Activated B cell treated with CpG ODN at 0.5 μM for 24 hours (primary cell): ENCODE measurements at regions of chr19 and their contacts with region 1.

Region 1: GRCh38 chr19:36418287-36419001 is at the start of gene ZFP82:
- DNase-seq: peak; percentile 87
- ATAC-seq: peak; percentile 95
- H3K4me3 Mint-ChIP-seq: peak within 1 kb of the TSS; percentile 97
- H3K27ac Mint-ChIP-seq: peak within 1 kb of the TSS; percentile 97
- H3K4me1 Mint-ChIP-seq: peaks cover 30% of the 10 kb centered on the region
- H3K27me3 Mint-ChIP-seq: peaks cover 15% of the 10 kb centered on the region
- CTCF ChIP-seq: no peak
- total RNA-seq, gene ZFP82: 10.4 and 11.4 TPM in 2 replicates

Region 2: GRCh38 chr19:36331353-36332228 is 86.9 kb before region 1 on chr19:
- CTCF ChIA-PET with region 1: no interaction called
- POLR2A ChIA-PET with region 1: no interaction called
- intact Hi-C with region 1: loop called (anchors 5 kb)
- DNase-seq: peak; percentile 78
- ATAC-seq: peak; percentile 99
- H3K4me3 Mint-ChIP-seq: peak overlapping the region; percentile 86
- H3K27ac Mint-ChIP-seq: peak overlapping the region; percentile 76
- H3K4me1 Mint-ChIP-seq: peaks cover 26% of the 10 kb centered on the region
- H3K27me3 Mint-ChIP-seq: no peaks in the 10 kb centered on the region
- CTCF ChIP-seq: no peak

Region 3: DNA sequence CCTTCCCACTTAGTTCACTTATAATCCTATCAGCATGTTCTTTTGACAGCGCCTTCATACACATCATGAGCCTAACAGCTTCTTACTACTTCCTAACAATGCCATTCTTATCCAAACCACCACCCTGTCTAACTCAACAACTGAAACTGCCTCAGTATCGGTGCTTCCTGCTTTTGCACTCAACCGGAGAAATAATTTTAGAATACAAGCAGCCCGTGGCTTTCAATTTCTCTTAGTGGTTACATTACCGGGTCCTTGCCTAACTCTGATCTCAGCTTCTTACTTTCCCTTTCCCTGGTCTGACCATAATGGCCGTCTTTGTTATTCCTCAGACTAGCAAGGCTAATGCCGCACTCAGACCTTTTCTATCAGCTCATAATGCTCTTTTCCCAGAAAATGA is 17.0 kb before region 1 on chr19:
- CTCF ChIA-PET with region 1: no interaction called
- POLR2A ChIA-PET with region 1: interaction called, 10 read pairs
- intact Hi-C with region 1: no loop called
- DNase-seq: no peak
- ATAC-seq: peak; percentile 95
- H3K4me3 Mint-ChIP-seq: peak overlapping the region; percentile 69
- H3K27ac Mint-ChIP-seq: peak overlapping the region; percentile 85
- H3K4me1 Mint-ChIP-seq: peaks cover 22% of the 10 kb centered on the region
- H3K27me3 Mint-ChIP-seq: no peaks in the 10 kb centered on the region
- CTCF ChIP-seq: no peak

Region 4: DNA sequence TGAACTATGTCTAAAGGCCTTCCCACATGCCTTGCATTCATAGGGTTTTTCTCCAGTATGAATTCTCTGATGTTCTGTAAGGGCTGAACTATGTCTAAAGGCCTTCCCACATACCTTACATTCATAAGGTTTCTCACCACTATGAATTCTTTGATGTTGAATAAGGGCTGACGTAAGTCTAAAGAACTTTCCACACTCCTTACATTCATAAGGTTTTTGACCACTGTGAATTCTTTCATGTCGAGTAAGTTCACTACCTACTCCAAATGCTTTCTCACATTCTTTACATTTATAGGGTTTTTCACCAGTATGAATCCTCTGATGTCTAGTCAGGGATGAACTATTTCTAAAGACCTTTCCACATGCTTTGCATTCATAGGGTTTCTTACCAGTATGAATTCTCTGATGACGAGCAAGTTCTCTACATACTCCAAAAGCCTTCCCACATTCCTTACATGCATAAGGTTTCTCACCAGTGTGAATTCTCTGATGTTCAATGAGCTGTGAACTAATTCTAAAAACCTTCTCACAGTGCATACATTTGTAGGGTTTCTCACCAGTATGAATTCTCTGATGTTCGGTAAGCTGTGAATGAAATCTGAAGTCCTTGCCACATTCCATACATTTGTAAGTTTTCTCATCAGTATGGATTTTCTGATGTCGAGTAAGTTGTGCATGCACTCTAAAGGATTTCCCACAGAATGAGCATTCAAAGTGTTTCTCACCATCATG is 128.7 kb after region 1 on chr19:
- CTCF ChIA-PET with region 1: no interaction called
- POLR2A ChIA-PET with region 1: no interaction called
- intact Hi-C with region 1: no loop called
- DNase-seq: no peak
- ATAC-seq: no peak
- H3K4me3 Mint-ChIP-seq: no peak overlapping the region
- H3K27ac Mint-ChIP-seq: no peak overlapping the region
- H3K4me1 Mint-ChIP-seq: no peaks in the 10 kb centered on the region
- H3K27me3 Mint-ChIP-seq: no peaks in the 10 kb centered on the region
- CTCF ChIP-seq: no peak